A549 (cell line): ENCODE measurements at regions of chr12 and their contacts with region 1.

Region 1: GRCh38 chr12:6084261-6084968 is 40.1 kb downstream of the VWF start:
- DNase-seq: peak; percentile 46 to 57
- ATAC-seq: peak; percentile 35 to 55; a peak in 3 of 6 replicates
- H3K4me3 ChIP-seq: no peak overlapping the region
- H3K27ac ChIP-seq: peak overlapping the region in 1 of 2 experiments; percentile 31; a peak in 1 of 6 replicates
- H3K4me1 ChIP-seq: peaks cover 20% of the 10 kb centered on the region
- CTCF ChIP-seq: no peak
- EP300 ChIP-seq: no peak
- POLR2A ChIP-seq: no peak
- RAD21 ChIP-seq: no peak

Region 2: DNA sequence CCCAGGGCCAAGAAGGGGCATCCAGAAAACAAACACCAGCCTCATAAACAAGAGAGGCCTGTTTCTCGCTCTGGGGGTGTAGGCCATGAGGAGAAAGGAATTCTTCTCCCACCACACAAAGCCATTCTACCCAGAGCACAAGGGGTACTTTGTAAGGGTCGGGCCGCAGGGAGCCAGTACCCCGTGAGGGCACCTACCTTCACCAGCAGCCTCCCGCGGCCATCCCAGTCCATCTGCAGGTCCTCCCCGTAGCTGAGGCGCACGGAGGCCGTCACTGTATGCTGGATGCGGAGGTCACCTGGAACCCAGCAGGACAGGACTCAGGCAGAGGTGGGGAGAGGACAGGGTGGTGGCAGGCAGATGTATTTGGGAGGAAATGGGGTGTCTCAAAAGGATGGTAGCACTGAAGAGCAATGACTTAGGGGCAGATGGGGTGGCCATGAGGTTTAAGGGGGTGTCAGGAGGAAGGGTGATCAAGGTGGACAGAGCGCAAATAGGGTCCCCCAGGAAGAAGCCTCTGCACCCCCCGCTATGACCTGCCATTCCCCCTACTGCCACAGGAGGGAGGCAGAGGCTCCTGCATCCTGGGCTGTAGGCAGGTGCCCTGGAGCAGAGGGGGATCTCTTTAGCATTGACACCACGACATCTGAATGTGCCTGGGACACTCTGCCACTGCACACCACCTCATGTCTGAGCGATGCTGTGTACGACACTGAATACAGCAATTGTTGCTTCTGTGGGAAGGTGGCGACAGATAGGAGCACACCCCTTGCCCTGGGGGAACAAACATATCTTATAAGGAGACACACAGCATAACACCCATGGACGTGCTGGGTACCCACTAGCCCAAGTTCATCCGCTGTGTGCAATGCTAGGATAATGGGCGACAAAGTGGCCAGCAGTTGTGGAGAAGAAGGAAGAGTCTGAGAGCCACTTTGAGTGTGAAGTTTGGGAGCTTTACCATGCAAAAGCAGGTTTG is 21.4 kb before region 1 on chr12:
- CTCF ChIA-PET with region 1: interaction called, 15 read pairs
- POLR2A ChIA-PET with region 1: no interaction called
- DNase-seq: peak; percentile 59 to 77
- ATAC-seq: peak; percentile 71 to 90
- H3K4me3 ChIP-seq: no peak overlapping the region
- H3K27ac ChIP-seq: no peak overlapping the region
- H3K4me1 ChIP-seq: no peaks in the 10 kb centered on the region
- CTCF ChIP-seq: peak; percentile 84
- EP300 ChIP-seq: no peak
- POLR2A ChIP-seq: no peak
- RAD21 ChIP-seq: peak; percentile 91 to 96

Region 3: GRCh38 chr12:6072302-6072752 is 12.1 kb before region 1 on chr12:
- CTCF ChIA-PET with region 1: interaction called, 15 read pairs
- POLR2A ChIA-PET with region 1: no interaction called
- DNase-seq: peak in 1 of 2 experiments; percentile 66
- ATAC-seq: peak in 1 of 2 experiments; percentile 48; a peak in 3 of 6 replicates
- H3K4me3 ChIP-seq: no peak overlapping the region
- H3K27ac ChIP-seq: no peak overlapping the region
- H3K4me1 ChIP-seq: 0 out of 3 replicates have a peak, but pooled peaks cover 4% of the 10 kb centered on the region
- CTCF ChIP-seq: no peak
- EP300 ChIP-seq: no peak
- POLR2A ChIP-seq: no peak
- RAD21 ChIP-seq: peak in 1 of 2 experiments; percentile 15; a peak in 1 of 5 replicates

Region 4: GRCh38 chr12:6124411-6125309 is 40.2 kb after region 1 on chr12 and contains the start of gene VWF:
- CTCF ChIA-PET with region 1: no interaction called
- POLR2A ChIA-PET with region 1: no interaction called
- DNase-seq: no peak
- ATAC-seq: peak in 1 of 2 experiments; percentile 27; a peak in 1 of 6 replicates
- H3K4me3 ChIP-seq: no peak within 1 kb of the TSS
- H3K27ac ChIP-seq: no peak within 1 kb of the TSS
- H3K4me1 ChIP-seq: no peaks in the 10 kb centered on the region
- CTCF ChIP-seq: no peak
- EP300 ChIP-seq: no peak
- POLR2A ChIP-seq: no peak
- RAD21 ChIP-seq: no peak
- polyA plus RNA-seq, gene VWF: 0.01 TPM in 2 replicates